IMR-90 (cell line): ENCODE measurements at regions of chr2 and their contacts with region 1.

Region 1: DNA sequence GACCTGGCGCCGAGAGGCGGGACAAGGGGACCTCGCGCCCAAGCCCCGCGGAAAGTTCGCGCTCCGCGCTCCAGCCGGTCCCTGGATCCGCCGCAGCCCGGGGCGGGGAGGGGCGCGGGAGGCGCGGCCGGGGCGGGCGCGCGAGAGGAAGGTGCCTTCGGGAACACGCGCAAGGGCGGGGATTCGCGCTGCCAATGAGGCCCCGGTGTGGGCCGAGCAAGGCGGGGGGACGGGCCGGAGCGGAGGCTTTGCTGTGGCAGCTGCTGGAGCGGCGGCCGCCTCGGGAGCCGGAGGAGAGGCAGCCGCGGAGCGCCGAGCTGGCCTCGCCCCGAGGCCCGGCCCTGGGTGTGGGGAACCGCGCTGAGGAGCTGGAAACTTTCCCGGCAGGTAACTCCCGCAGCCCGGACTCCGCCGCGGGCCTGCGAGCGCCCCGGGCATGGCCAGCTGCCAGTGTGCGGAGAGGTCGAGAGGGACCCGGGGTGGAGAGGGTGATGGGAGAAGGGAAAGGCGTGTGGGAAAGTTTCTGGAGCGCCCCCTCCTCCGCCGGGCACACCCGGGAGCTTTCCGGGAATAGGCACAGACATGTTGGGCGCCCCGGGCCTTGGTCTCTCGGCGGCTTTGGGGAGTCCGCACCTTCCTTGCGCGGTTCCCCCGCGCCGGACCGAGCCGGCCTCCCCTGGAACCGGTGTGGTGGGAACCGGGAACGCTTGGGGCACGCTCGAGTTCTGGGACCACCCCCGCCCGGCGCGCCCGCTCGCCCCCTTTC is at the start of gene TANC1:
- DNase-seq: peak; percentile 90
- ATAC-seq: peak; percentile 93
- H3K4me3 ChIP-seq: peak within 1 kb of the TSS; percentile 87
- H3K27ac ChIP-seq: peak within 1 kb of the TSS; percentile 90
- H3K4me1 ChIP-seq: peaks cover 10% of the 10 kb centered on the region
- H3K27me3 ChIP-seq: no peaks in the 10 kb centered on the region
- CTCF ChIP-seq: no peak
- POLR2A ChIP-seq: peak; percentile 88
- RAD21 ChIP-seq: no peak; the same call in 1 of the 2 replicates
- total RNA-seq, gene TANC1: 12.8 and 12.9 TPM in 2 replicates

Region 2: GRCh38 chr2:159071190-159071915 is 102.8 kb after region 1 on chr2:
- CTCF ChIA-PET with region 1: interaction called, 3 read pairs
- POLR2A ChIA-PET with region 1: no interaction called
- dilution Hi-C with region 1: no loop called
- in situ Hi-C with region 1: no loop called
- intact Hi-C with region 1: loop called (anchors 5 kb)
- DNase-seq: peak; percentile 59
- ATAC-seq: peak; percentile 19; the same call in 1 of the 2 replicates
- H3K4me3 ChIP-seq: no peak overlapping the region
- H3K27ac ChIP-seq: peak overlapping the region; percentile 59; the same call in 1 of the 2 replicates
- H3K4me1 ChIP-seq: peaks cover 24% of the 10 kb centered on the region
- H3K27me3 ChIP-seq: no peaks in the 10 kb centered on the region
- CTCF ChIP-seq: no peak
- POLR2A ChIP-seq: no peak
- RAD21 ChIP-seq: no peak

Region 3: GRCh38 chr2:159118115-159118858 is 149.7 kb after region 1 on chr2:
- CTCF ChIA-PET with region 1: interaction called, 3 read pairs
- POLR2A ChIA-PET with region 1: interaction called, 3 read pairs
- dilution Hi-C with region 1: no loop called
- in situ Hi-C with region 1: no loop called
- intact Hi-C with region 1: loop called (anchors 1 kb)
- DNase-seq: peak; percentile 88
- ATAC-seq: peak; percentile 97
- H3K4me3 ChIP-seq: no peak overlapping the region
- H3K27ac ChIP-seq: no peak overlapping the region
- H3K4me1 ChIP-seq: peaks cover 12% of the 10 kb centered on the region
- H3K27me3 ChIP-seq: no peaks in the 10 kb centered on the region
- CTCF ChIP-seq: peak; percentile 92
- POLR2A ChIP-seq: peak; percentile 51; the same call in 1 of the 2 replicates
- RAD21 ChIP-seq: peak; percentile 99

Region 4: GRCh38 chr2:159201360-159202063 is 232.9 kb after region 1 on chr2:
- CTCF ChIA-PET with region 1: no interaction called
- POLR2A ChIA-PET with region 1: no interaction called
- dilution Hi-C with region 1: no loop called
- in situ Hi-C with region 1: no loop called
- intact Hi-C with region 1: loop called (anchors 2 kb)
- DNase-seq: peak; percentile 78
- ATAC-seq: peak; percentile 5; the same call in 1 of the 2 replicates
- H3K4me3 ChIP-seq: no peak overlapping the region
- H3K27ac ChIP-seq: no peak overlapping the region
- H3K4me1 ChIP-seq: peaks cover 13% of the 10 kb centered on the region
- H3K27me3 ChIP-seq: no peaks in the 10 kb centered on the region
- CTCF ChIP-seq: no peak
- POLR2A ChIP-seq: no peak; the same call in 1 of the 2 replicates
- RAD21 ChIP-seq: no peak

Region 5: DNA sequence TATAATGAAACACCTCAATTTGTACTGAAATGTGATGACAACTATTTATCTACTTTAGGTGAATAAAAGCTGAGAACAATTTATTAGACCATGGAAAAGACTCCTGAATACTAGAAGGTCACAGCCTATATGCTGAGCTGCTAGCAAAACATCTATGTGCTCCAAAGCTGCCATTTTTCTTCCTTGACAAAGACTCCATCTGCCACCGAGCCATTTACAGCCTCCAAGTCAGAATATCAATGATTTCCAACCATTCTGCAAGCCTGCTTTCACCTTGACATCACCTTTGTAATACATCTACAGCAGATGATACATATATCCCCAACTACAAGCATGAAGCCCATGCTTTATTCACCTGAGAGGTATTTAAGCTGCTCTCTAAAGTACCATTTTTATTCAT is 562.9 kb after region 1 on chr2:
- CTCF ChIA-PET with region 1: no interaction called
- POLR2A ChIA-PET with region 1: no interaction called
- dilution Hi-C with region 1: no loop called
- in situ Hi-C with region 1: no loop called
- intact Hi-C with region 1: no loop called
- DNase-seq: no peak
- ATAC-seq: no peak
- H3K4me3 ChIP-seq: no peak overlapping the region
- H3K27ac ChIP-seq: no peak overlapping the region
- H3K4me1 ChIP-seq: no peaks in the 10 kb centered on the region
- H3K27me3 ChIP-seq: no peaks in the 10 kb centered on the region
- CTCF ChIP-seq: no peak
- POLR2A ChIP-seq: no peak
- RAD21 ChIP-seq: no peak